Spleen (tissue), 13 donors: ENCODE measurements at regions of chr19 and their contacts with region 1.

Region 1: GRCh38 chr19:48110350-48110966 is at the start of gene PLA2G4C:
- DNase-seq: peak; percentile 95
- H3K4me3 ChIP-seq: peak within 1 kb of the TSS; percentile 42 to 70 (median 48)
- H3K27ac ChIP-seq: peak within 1 kb of the TSS; percentile 89 to 97 (median 92)
- H3K4me1 ChIP-seq: peaks cover 12 to 46% (median 35%) of the 10 kb centered on the region in 6 donors
- H3K27me3 ChIP-seq: no peaks in the 10 kb centered on the region
- CTCF ChIP-seq: peak in 1 of 11 experiments; percentile 7
- POLR2A ChIP-seq: peak in 2 of 3 donors; percentile 12 to 33
- total RNA-seq, gene PLA2G4C: 17.0 to 62.5 (median 27.7) TPM

Region 2: DNA sequence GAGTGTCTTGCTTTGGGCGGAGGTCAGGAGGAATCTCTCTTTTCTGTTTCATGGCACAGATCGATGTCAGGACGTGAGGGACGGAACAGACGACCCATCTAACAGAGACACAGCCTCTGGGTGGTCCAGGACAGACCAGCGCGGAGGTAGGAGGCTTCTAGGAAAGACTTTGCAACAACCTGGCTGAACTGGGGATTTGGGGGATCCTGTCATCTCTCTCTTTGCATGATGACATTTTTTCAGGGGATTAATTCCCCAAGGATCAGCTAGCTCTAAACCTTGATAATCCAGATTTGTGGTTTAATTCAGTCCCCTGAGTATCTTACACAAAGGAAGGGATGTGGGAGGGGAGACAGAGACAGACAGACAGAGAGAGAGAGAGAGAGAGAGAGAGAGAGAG is 81.0 kb before region 1 on chr19:
- intact Hi-C with region 1: no loop called
- DNase-seq: no peak
- H3K4me3 ChIP-seq: no peak overlapping the region
- H3K27ac ChIP-seq: no peak overlapping the region
- H3K4me1 ChIP-seq: no peaks in the 10 kb centered on the region
- H3K27me3 ChIP-seq: peaks cover 0 to 58% (median 0%) of the 10 kb centered on the region in 7 donors
- CTCF ChIP-seq: no peak
- POLR2A ChIP-seq: no peak

Region 3: DNA sequence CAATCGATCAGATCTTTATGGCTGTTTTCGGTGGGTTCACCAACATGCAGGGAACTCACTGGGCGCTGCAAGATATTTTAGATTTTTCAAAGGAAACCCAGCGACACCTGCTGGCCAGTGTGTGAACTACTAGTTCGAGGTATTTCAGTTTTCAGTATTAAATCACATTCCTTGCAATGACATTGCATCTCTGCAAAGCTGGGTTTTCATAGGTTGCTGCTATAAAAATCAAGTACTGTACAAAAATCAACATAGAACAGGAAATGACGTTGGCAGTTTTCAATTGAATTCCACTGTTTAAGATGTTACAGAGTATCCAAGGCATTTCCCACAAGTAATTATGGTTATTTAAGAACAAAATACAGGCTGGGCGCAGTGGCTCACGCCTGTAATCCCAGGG is 42.1 kb after region 1 on chr19:
- intact Hi-C with region 1: loop called (anchors 2 kb)
- DNase-seq: peak; percentile 80
- H3K4me3 ChIP-seq: no peak overlapping the region
- H3K27ac ChIP-seq: peak overlapping the region in 1 of 8 donors; percentile 30
- H3K4me1 ChIP-seq: peaks cover 0 to 13% (median 7%) of the 10 kb centered on the region in 6 donors
- H3K27me3 ChIP-seq: no peaks in the 10 kb centered on the region
- CTCF ChIP-seq: peak; percentile 59 to 89 (median 81)
- POLR2A ChIP-seq: no peak

Region 4: GRCh38 chr19:48255376-48256303 is 145.2 kb after region 1 on chr19 and contains the start of gene CARD8:
- intact Hi-C with region 1: loop called (anchors 5 kb)
- DNase-seq: peak; percentile 92
- H3K4me3 ChIP-seq: peak within 1 kb of the TSS; percentile 35 to 67 (median 46)
- H3K27ac ChIP-seq: peak within 1 kb of the TSS; percentile 93 to 98 (median 96)
- H3K4me1 ChIP-seq: peaks cover 52 to 93% (median 78%) of the 10 kb centered on the region in 6 donors
- H3K27me3 ChIP-seq: no peaks in the 10 kb centered on the region
- CTCF ChIP-seq: peak in 3 of 11 experiments; percentile 28 to 48 (median 35)
- POLR2A ChIP-seq: peak; percentile 58 to 86 (median 84)
- total RNA-seq, gene CARD8: 147 to 238 (median 178) TPM